Caco-2 (cell line): ENCODE measurements at regions of chr5 and their contacts with region 1.

Region 1: DNA sequence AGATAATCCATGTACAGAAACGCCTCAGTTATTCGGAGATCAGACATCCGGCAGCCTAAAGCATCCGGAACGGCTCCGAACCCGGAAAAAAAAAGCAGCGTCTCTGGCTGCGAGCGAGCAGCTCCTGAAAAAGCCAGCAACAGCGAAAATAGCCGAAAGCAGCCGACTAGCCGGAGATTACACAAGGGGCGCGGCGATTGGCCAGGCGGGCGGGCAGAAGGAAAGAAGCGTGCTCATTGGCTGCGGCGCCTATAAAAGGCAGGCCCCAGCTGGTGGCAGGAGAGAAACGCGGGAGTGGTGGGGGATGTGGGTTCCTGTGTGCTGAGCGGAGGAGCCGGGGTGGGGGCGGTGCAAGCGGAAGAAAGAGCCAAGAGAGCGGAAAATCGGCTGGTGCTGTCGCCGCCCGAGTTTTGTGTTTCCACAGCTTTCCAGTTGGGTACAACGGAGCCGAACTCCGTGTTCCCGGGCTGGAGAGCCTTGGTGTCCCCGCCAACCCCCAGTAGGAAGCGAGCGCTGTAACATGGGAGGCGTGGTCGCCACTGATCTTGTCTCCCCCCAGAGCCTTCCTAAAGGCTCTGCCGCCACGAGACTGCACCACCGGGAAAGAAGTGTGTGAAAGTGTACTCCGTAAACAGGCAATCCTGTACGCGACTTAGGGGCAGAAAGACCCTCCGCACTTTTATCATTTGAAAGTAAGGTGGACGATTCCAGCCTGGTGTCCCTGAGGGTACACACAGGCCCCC is at the start of gene ARL15:
- DNase-seq: peak; percentile 99
- H3K4me3 ChIP-seq: peak within 1 kb of the TSS; percentile 93
- H3K4me3 Mint-ChIP-seq: peak within 1 kb of the TSS; percentile 91
- H3K27ac Mint-ChIP-seq: peak within 1 kb of the TSS; percentile 96
- H3K4me1 ChIP-seq: peaks cover 34% of the 10 kb centered on the region
- H3K4me1 Mint-ChIP-seq: peaks cover 34% of the 10 kb centered on the region
- H3K27me3 ChIP-seq: no peaks in the 10 kb centered on the region
- H3K27me3 Mint-ChIP-seq: peaks cover 3% of the 10 kb centered on the region
- CTCF ChIP-seq: no peak
- total RNA-seq, gene ARL15: 122 and 140 TPM in 2 replicates

Region 2: GRCh38 chr5:54243473-54244080 is 67.0 kb before region 1 on chr5:
- CTCF ChIA-PET with region 1: interaction called, 16 read pairs
- POLR2A ChIA-PET with region 1: interaction called, 6 read pairs
- intact Hi-C with region 1: loop called (anchors 1 kb)
- DNase-seq: peak in 1 of 2 experiments; percentile 62
- H3K4me3 ChIP-seq: no peak overlapping the region
- H3K4me3 Mint-ChIP-seq: no peak overlapping the region
- H3K27ac Mint-ChIP-seq: no peak overlapping the region
- H3K4me1 ChIP-seq: 0 out of 2 replicates have a peak, but pooled peaks cover 9% of the 10 kb centered on the region
- H3K4me1 Mint-ChIP-seq: peaks cover 10% of the 10 kb centered on the region
- H3K27me3 ChIP-seq: no peaks in the 10 kb centered on the region
- H3K27me3 Mint-ChIP-seq: no peaks in the 10 kb centered on the region
- CTCF ChIP-seq: peak; percentile 78 to 83

Region 3: DNA sequence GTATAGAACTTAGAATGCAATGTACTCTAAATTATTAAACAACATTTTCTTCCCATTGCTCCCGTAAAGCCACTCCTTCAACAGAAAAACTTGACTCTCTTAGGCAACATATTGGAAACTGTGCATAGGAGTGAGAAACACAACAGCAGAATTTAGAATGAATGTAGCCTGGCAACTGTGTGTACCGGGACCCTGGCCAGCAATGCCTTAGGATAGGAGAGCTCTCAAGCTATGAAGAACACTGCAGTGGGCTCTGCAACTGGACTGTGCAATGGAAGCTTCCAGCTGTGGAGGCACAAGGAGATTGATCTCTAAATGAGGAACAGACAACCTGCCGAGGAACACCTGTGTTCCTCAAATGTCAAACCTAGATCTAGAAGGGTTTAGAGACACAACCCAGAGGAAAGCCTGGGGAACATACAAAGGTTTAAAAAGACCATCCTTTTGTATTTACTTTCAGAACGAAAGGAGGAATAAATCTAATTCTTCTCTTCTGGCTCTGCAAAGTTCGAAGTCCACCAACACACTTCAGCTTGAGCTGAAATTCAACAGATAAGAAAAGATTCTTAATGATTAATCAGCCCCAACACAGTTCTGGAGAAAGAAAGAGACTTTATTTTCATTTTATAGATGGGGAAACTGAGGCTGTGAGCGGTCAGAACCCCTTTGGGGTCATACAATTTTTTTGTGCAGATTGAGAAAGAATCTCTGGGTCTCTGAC is 51.2 kb after region 1 on chr5:
- CTCF ChIA-PET with region 1: no interaction called
- POLR2A ChIA-PET with region 1: no interaction called
- intact Hi-C with region 1: loop called (anchors 2 kb)
- DNase-seq: no peak
- H3K4me3 ChIP-seq: no peak overlapping the region
- H3K4me3 Mint-ChIP-seq: peak overlapping the region; percentile 37
- H3K27ac Mint-ChIP-seq: peak overlapping the region; percentile 39
- H3K4me1 ChIP-seq: peaks cover 35% of the 10 kb centered on the region
- H3K4me1 Mint-ChIP-seq: peaks cover 32% of the 10 kb centered on the region
- H3K27me3 ChIP-seq: no peaks in the 10 kb centered on the region
- H3K27me3 Mint-ChIP-seq: no peaks in the 10 kb centered on the region
- CTCF ChIP-seq: no peak

Region 4: DNA sequence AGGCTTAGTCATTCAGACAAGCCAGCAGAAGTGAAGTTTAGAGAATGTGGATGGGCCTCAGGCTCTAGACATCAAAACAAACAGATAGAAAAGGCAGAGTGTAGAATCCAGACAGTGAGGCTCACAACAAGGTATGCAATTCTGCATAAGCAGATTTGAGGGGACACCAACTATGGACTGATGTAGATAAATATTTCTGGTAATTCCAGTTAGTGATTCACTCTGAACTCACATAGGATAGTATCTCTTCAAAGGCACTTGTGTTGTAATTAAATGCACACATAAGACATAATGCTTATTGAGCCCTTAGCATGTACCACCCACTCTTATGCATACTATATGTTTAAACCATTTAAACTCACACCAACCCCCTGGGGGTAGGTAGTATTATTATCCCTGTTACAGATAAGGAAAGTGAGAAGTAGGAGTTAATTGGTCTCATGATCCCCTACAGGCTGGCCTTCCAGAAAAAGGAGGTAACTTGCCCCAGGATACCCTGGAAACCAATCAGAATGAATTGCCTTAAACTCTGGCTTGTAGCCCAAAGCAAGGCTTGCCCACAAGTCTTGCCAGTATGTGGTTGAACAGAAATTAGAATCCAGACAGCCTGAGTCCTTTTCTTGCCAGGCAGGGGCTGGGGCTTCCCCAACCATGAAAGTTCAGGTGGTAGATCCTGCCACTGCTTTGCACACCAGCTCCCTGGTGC is 105.4 kb after region 1 on chr5:
- CTCF ChIA-PET with region 1: interaction called, 16 read pairs
- POLR2A ChIA-PET with region 1: interaction called, 6 read pairs
- intact Hi-C with region 1: loop called (anchors 1 kb)
- DNase-seq: peak in 1 of 2 experiments; percentile 49
- H3K4me3 ChIP-seq: no peak overlapping the region
- H3K4me3 Mint-ChIP-seq: no peak overlapping the region
- H3K27ac Mint-ChIP-seq: peak overlapping the region; percentile 16
- H3K4me1 ChIP-seq: peaks cover 24% of the 10 kb centered on the region
- H3K4me1 Mint-ChIP-seq: peaks cover 39% of the 10 kb centered on the region
- H3K27me3 ChIP-seq: no peaks in the 10 kb centered on the region
- H3K27me3 Mint-ChIP-seq: no peaks in the 10 kb centered on the region
- CTCF ChIP-seq: no peak

Region 5: DNA sequence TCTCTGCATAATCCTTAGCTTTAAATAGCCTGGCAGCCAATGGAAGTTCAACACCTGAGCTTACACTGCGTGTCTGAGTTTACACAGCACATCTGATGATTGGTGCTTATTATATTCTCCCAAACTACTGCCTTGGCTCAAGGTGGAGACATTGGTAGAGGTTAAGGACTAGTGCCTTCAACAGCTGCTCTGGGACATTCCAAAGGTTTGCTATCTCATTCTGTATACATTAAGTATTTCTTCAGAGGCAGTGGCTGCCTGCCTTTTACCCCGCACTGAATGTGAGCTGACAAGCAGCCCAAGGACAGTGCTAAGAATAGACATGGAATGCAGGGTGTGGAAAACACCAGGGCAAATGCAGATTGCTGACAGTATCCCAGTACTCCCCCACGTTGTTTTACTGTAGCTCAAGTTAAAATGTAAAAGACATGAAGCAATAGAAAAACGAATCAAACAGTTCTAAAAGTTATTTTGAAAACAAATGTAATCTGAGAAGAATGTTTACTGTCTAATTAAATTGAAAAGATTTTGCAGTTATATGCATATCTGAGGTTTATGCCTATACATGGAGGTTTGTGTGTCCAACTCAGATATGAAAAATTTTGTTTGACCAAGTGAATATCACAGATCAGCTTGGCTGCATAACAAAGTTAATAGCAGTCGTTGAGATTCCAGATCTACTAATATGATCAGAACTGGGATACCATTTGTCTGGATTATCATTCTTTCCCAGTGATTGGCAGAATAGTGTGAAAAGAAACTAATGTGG is 146.7 kb after region 1 on chr5:
- CTCF ChIA-PET with region 1: interaction called, 5 read pairs
- POLR2A ChIA-PET with region 1: interaction called, 27 read pairs
- intact Hi-C with region 1: loop called (anchors 1 kb)
- DNase-seq: peak; percentile 89 to 96
- H3K4me3 ChIP-seq: no peak overlapping the region
- H3K4me3 Mint-ChIP-seq: peak overlapping the region; percentile 55
- H3K27ac Mint-ChIP-seq: peak overlapping the region; percentile 94
- H3K4me1 ChIP-seq: peaks cover 39% of the 10 kb centered on the region
- H3K4me1 Mint-ChIP-seq: peaks cover 22% of the 10 kb centered on the region
- H3K27me3 ChIP-seq: no peaks in the 10 kb centered on the region
- H3K27me3 Mint-ChIP-seq: no peaks in the 10 kb centered on the region
- CTCF ChIP-seq: no peak

Region 6: GRCh38 chr5:54517174-54518092 is 206.8 kb after region 1 on chr5 and contains the start of gene SNX18:
- CTCF ChIA-PET with region 1: no interaction called
- POLR2A ChIA-PET with region 1: interaction called, 12 read pairs
- intact Hi-C with region 1: no loop called
- DNase-seq: peak; percentile 93 to 95
- H3K4me3 ChIP-seq: peak within 1 kb of the TSS; percentile 95
- H3K4me3 Mint-ChIP-seq: peak within 1 kb of the TSS; percentile 68
- H3K27ac Mint-ChIP-seq: no peak within 1 kb of the TSS
- H3K4me1 ChIP-seq: peaks cover 25% of the 10 kb centered on the region
- H3K4me1 Mint-ChIP-seq: no peaks in the 10 kb centered on the region
- H3K27me3 ChIP-seq: no peaks in the 10 kb centered on the region
- H3K27me3 Mint-ChIP-seq: no peaks in the 10 kb centered on the region
- CTCF ChIP-seq: peak; percentile 93 to 97
- total RNA-seq, gene SNX18: 25.0 and 28.0 TPM in 2 replicates